ENCODE measurements at regions of chr10 and their contacts with region 1.

Region 1: DNA sequence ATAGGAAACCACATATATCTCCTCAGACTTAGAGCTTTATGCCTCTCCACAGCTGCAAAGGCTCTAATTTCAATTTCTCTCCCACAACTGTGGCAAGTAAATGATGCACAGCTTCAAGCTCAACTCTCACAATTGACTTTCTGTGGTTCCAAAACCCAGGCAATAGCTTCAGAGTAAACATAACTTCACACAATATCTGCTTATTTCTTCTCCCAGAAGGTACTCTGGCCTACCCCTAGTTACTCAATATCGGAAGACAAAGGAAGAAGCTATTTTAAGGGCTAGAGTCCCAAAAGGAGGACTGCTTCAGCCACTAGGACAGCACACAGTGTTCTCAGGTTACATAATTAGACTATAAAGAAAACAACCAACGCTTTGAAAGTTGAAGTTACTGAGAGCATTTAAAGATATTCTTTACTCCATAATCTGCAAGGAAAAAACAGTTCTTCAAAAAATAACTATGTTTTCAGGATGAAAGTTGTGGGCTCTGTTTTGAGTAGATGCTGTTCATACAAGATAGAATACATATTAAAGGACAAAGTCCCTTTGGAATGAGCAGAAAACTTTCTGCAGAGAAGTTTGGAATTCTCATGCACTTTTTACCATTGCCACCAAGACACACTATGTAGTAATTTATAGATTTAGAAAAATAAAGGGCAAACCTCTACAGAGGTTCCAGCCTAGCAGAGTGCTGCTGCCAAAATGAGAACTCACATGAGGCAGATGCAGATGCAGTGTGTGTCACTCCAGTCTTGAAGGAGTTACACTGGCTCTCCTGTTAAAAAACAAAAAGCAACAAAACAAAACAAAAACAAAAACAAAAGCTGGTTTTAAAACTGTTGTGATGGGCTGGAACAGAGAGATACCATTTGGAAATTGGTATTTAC is 81.8 kb downstream of the NT5C2 start:
- DNase-seq: no peak
- H3K4me3 ChIP-seq: no peak overlapping the region
- H3K27ac ChIP-seq: peak overlapping the region; percentile 71 to 78 (median 73)
- H3K4me1 ChIP-seq: peaks cover 2 to 38% (median 30%) of the 10 kb centered on the region in 4 donors
- H3K27me3 ChIP-seq: no peaks in the 10 kb centered on the region
- CTCF ChIP-seq: no peak
- EP300 ChIP-seq: peak in 2 of 4 donors; percentile 42 to 50
- POLR2A ChIP-seq: no peak

Region 2: DNA sequence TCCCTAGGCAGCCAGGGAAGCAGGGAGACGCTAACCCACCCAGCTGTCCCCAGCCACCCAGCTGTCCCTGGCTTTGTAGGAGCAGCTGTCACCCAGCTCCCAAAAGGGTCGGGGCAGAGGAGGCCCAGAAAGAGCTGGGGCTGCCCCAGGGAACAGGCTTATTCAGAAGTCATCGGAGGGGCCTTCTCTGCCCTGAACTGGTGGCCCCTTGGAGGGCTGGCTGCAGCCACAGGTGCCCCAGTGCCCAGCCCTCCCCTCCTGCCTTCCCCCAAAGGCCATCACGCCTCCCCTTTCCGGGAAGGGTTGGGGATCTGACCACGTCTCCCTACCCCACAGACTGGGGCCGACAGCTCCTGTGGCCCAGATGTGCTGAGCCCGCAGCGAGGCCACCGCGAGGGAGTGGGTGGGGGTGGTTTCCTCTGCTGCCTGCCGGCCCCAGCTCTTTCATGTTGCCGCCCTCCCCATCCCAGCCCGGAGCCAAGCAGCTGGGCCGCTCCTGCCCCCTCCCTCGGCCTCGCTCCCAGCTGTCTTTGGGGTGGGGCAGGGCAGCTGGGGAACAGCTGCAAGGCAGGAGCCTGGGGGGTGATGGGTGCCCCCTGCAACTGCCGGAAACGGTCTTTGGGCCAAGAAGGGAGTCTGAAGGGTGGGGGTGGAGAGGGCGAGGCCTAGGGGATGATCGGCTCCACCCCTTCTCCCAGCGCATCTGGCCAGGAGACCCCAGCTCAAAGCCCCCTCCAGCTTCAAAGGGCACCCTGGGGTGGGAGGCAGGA is 450.2 kb before region 1 on chr10:
- intact Hi-C with region 1: no loop called
- DNase-seq: peak; percentile 84
- H3K4me3 ChIP-seq: peak overlapping the region in 1 of 4 donors; percentile 2
- H3K27ac ChIP-seq: peak overlapping the region in 2 of 4 donors; percentile 8 to 38
- H3K4me1 ChIP-seq: peaks cover 0 to 21% (median 16%) of the 10 kb centered on the region in 4 donors
- H3K27me3 ChIP-seq: no peaks in the 10 kb centered on the region
- CTCF ChIP-seq: no peak
- EP300 ChIP-seq: no peak
- POLR2A ChIP-seq: no peak

Region 3: GRCh38 chr10:103192451-103193106 is 81.3 kb after region 1 on chr10:
- intact Hi-C with region 1: loop called (anchors 2 kb)
- DNase-seq: peak; percentile 91
- H3K4me3 ChIP-seq: peak overlapping the region; percentile 85 to 98 (median 96)
- H3K27ac ChIP-seq: peak overlapping the region; percentile 97 to 98 (median 97)
- H3K4me1 ChIP-seq: peaks cover 0 to 46% (median 41%) of the 10 kb centered on the region in 4 donors
- H3K27me3 ChIP-seq: no peaks in the 10 kb centered on the region
- CTCF ChIP-seq: no peak
- EP300 ChIP-seq: no peak
- POLR2A ChIP-seq: peak; percentile 12 to 43

Region 4: DNA sequence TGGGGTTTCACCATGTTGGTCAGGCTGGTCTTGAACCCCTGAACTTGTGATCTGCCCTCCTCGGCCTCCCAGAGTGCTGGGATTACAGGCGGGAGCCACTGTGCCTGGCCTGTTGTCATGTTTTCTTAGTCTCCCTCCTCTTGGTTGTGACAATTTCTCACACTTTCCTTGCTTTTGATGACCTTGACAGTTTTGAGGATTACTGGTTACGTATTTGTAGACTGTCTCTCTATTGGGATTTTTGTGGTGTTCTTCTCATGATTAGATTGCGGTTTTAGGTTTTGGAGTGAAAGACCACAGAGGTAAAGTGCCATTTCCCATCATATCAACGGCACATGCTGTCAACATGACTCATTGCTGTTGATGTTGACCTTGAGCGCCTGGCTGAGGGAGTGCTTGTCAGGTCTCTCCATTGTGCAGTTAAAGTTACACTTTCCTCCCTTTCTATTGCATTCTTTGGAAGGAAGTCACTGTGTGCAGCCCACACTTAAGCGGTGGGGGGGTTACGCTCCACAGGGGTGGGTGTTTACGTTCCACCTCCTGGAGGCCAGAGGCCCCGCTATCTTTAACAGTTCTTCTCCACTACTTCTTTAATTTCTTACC is 393.0 kb after region 1 on chr10:
- intact Hi-C with region 1: no loop called
- DNase-seq: no peak
- H3K4me3 ChIP-seq: no peak overlapping the region
- H3K27ac ChIP-seq: no peak overlapping the region
- H3K4me1 ChIP-seq: no peaks in the 10 kb centered on the region
- H3K27me3 ChIP-seq: peaks cover 0 to 9% (median 0%) of the 10 kb centered on the region in 3 donors
- CTCF ChIP-seq: no peak
- EP300 ChIP-seq: no peak
- POLR2A ChIP-seq: no peak

Measured in sigmoid colon (tissue), 7 donors.